CD4-positive, alpha-beta T cell (primary cell): ENCODE measurements at regions of chr4 and their contacts with region 1.

Region 1: GRCh38 chr4:142846729-142847596 is 862 bp upstream of the INPP4B start:
- DNase-seq: peak; percentile 63 to 87 (median 70)
- ATAC-seq: peak; percentile 87
- H3K4me3 ChIP-seq: peak overlapping the region; percentile 67
- H3K4me3 Mint-ChIP-seq: peak overlapping the region; percentile 89
- H3K27ac ChIP-seq: no peak overlapping the region
- H3K27ac Mint-ChIP-seq: peak overlapping the region; percentile 47
- H3K4me1 ChIP-seq: peaks cover 24% of the 10 kb centered on the region
- H3K4me1 Mint-ChIP-seq: peaks cover 14% of the 10 kb centered on the region
- H3K27me3 ChIP-seq: peaks cover 4 to 12% of the 10 kb centered on the region in 2 experiments
- H3K27me3 Mint-ChIP-seq: peaks cover 22% of the 10 kb centered on the region
- CTCF ChIP-seq: peak; percentile 70

Region 2: DNA sequence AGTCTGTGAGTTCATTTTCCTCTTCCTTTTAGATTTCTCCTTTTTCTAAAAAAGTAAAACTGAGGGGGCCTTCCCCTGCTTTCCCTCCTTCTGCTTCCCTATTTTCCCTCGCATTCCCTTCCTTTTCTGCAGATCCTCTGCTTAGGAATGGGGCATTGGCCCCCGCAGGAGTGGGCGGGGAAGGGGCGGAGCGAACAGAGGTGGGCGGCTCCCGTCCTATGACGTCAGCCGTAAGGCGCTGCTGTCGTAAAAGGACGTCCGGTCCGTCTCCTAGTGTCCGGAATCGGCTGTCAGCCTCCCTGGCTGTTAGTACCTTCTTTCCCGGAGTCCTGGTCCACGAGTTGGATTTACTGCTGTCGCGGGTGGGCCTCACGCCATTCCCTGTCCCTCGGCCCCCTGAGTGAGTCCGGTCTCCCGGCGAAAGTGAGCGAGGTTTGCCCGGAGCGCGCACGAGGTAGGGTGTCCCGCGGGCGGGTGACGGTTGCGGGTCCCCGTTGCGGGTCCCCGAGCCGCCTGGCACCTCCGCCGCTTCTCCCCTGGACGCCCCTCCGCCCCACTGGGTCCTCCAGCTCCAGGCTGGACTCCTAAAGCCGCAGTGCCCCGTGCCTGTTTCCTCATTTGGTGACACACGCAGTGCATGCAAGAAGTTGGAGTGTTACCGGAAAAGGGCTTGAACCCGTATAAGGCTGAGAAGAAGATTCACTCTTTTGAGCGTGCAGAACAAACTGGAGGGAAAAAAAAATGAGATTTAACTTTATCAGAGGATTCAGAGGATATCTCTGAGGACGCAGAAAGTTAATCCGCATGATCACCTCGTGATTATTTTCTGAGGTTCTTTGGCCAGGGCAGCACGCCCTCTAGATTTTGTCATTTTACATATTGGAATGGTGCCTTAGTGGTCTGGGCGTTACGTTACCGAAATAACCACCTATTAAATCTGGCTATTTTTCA is 1626.0 kb before region 1 on chr4 and contains the start of gene ZNF330:
- CTCF ChIA-PET with region 1: no interaction called
- POLR2A ChIA-PET with region 1: no interaction called
- intact Hi-C with region 1: loop called in 1 of 2 experiments (anchors 10 kb)
- DNase-seq: peak; percentile 79 to 93 (median 84)
- ATAC-seq: peak; percentile 88
- H3K4me3 ChIP-seq: peak within 1 kb of the TSS; percentile 90
- H3K4me3 Mint-ChIP-seq: peak within 1 kb of the TSS; percentile 100
- H3K27ac ChIP-seq: peak within 1 kb of the TSS; percentile 82 to 90
- H3K27ac Mint-ChIP-seq: peak within 1 kb of the TSS; percentile 97
- H3K4me1 ChIP-seq: peaks cover 5% of the 10 kb centered on the region
- H3K4me1 Mint-ChIP-seq: peaks cover 56% of the 10 kb centered on the region
- H3K27me3 ChIP-seq: no peaks in the 10 kb centered on the region
- H3K27me3 Mint-ChIP-seq: peaks cover 4% of the 10 kb centered on the region
- CTCF ChIP-seq: no peak
- total RNA-seq, gene ZNF330: 41.1 to 43.8 TPM

Region 3: DNA sequence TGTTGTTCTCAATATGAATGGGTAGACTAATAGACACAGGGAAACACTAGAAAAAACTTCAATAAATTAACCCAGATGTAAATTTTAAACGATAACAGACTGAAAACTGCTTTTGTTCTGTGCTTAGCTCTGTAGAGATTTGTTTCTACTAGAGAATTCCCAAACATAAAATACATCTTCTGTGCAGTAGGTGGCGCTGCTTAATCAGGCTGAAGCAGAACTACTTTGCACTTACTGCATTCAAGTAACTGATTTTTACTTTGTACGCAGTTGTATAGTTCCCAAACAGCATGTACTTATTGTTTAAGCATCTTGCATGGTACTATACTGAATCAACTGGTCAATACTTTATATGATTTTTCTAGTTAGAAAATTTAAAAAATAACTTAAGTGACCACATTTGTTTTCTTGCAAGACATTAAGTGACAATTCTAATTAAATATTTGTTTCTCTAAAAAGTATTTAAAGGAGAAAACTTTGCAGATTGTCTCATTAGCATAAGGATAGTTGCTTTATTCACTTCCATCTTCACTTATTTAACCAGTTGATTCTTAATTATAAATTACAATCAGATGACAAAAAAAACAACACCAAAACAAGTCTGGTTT is 720.0 kb before region 1 on chr4:
- CTCF ChIA-PET with region 1: interaction called, 7 read pairs
- POLR2A ChIA-PET with region 1: interaction called, 5 read pairs
- intact Hi-C with region 1: loop called (anchors 1 to 2 kb)
- DNase-seq: peak; percentile 35 to 83 (median 57)
- ATAC-seq: peak; percentile 80
- H3K4me3 ChIP-seq: no peak overlapping the region
- H3K4me3 Mint-ChIP-seq: no peak overlapping the region
- H3K27ac ChIP-seq: no peak overlapping the region
- H3K27ac Mint-ChIP-seq: peak overlapping the region; percentile 6
- H3K4me1 ChIP-seq: peaks cover 8% of the 10 kb centered on the region
- H3K4me1 Mint-ChIP-seq: peaks cover 33% of the 10 kb centered on the region
- H3K27me3 ChIP-seq: no peaks in the 10 kb centered on the region
- H3K27me3 Mint-ChIP-seq: no peaks in the 10 kb centered on the region
- CTCF ChIP-seq: peak; percentile 85

Region 4: GRCh38 chr4:142353149-142353738 is 493.7 kb before region 1 on chr4:
- CTCF ChIA-PET with region 1: no interaction called
- POLR2A ChIA-PET with region 1: interaction called, 5 read pairs
- intact Hi-C with region 1: loop called (anchors 2 kb)
- DNase-seq: peak in 4 of 14 experiments; percentile 43 to 74 (median 64)
- ATAC-seq: peak; percentile 19
- H3K4me3 ChIP-seq: no peak overlapping the region
- H3K4me3 Mint-ChIP-seq: peak overlapping the region; percentile 52
- H3K27ac ChIP-seq: peak overlapping the region in 1 of 2 donors; percentile 72
- H3K27ac Mint-ChIP-seq: peak overlapping the region; percentile 89
- H3K4me1 ChIP-seq: peaks cover 45% of the 10 kb centered on the region
- H3K4me1 Mint-ChIP-seq: peaks cover 99% of the 10 kb centered on the region
- H3K27me3 ChIP-seq: no peaks in the 10 kb centered on the region
- H3K27me3 Mint-ChIP-seq: no peaks in the 10 kb centered on the region
- CTCF ChIP-seq: peak; percentile 97

Region 5: DNA sequence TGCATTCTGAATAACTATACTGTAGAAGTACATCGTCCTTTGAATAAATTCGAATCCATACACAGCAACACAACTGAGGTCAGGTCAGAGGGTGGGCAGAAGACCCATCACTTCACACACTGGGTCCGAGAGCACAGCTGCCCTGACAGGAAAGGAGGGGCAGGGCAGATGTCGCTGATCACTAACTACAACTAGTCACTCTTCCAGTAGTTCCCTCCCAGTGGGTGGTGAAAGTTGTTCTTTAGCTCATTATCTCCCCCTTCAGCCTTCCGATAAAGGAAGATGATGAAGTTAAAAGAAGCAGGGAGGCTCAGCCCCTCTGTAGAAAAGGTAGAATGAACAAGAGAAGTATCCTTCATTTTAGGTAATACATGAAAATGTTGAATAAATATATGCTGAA is 279.8 kb before region 1 on chr4:
- CTCF ChIA-PET with region 1: no interaction called
- POLR2A ChIA-PET with region 1: interaction called, 3 read pairs
- intact Hi-C with region 1: loop called in 1 of 2 experiments (anchors 10 kb)
- DNase-seq: peak; percentile 26 to 88 (median 50)
- ATAC-seq: peak; percentile 73
- H3K4me3 ChIP-seq: peak overlapping the region; percentile 54
- H3K4me3 Mint-ChIP-seq: peak overlapping the region; percentile 88
- H3K27ac ChIP-seq: peak overlapping the region; percentile 72 to 78
- H3K27ac Mint-ChIP-seq: peak overlapping the region; percentile 95
- H3K4me1 ChIP-seq: peaks cover 9% of the 10 kb centered on the region
- H3K4me1 Mint-ChIP-seq: peaks cover 81% of the 10 kb centered on the region
- H3K27me3 ChIP-seq: no peaks in the 10 kb centered on the region
- H3K27me3 Mint-ChIP-seq: no peaks in the 10 kb centered on the region
- CTCF ChIP-seq: peak; percentile 59

Region 6: GRCh38 chr4:142607976-142608375 is 239.0 kb before region 1 on chr4:
- CTCF ChIA-PET with region 1: no interaction called
- POLR2A ChIA-PET with region 1: no interaction called
- intact Hi-C with region 1: no loop called
- DNase-seq: no peak
- ATAC-seq: no peak
- H3K4me3 ChIP-seq: no peak overlapping the region
- H3K4me3 Mint-ChIP-seq: no peak overlapping the region
- H3K27ac ChIP-seq: no peak overlapping the region
- H3K27ac Mint-ChIP-seq: no peak overlapping the region
- H3K4me1 ChIP-seq: no peaks in the 10 kb centered on the region
- H3K4me1 Mint-ChIP-seq: no peaks in the 10 kb centered on the region
- H3K27me3 ChIP-seq: no peaks in the 10 kb centered on the region
- H3K27me3 Mint-ChIP-seq: no peaks in the 10 kb centered on the region
- CTCF ChIP-seq: no peak

Region 7: GRCh38 chr4:142861351-142861750 is 14.4 kb after region 1 on chr4:
- CTCF ChIA-PET with region 1: no interaction called
- POLR2A ChIA-PET with region 1: no interaction called
- intact Hi-C with region 1: no loop called
- DNase-seq: no peak
- ATAC-seq: no peak
- H3K4me3 ChIP-seq: no peak overlapping the region
- H3K4me3 Mint-ChIP-seq: no peak overlapping the region
- H3K27ac ChIP-seq: no peak overlapping the region
- H3K27ac Mint-ChIP-seq: no peak overlapping the region
- H3K4me1 ChIP-seq: no peaks in the 10 kb centered on the region
- H3K4me1 Mint-ChIP-seq: no peaks in the 10 kb centered on the region
- H3K27me3 ChIP-seq: peaks cover 4 to 5% of the 10 kb centered on the region in 2 experiments
- H3K27me3 Mint-ChIP-seq: peaks cover 19% of the 10 kb centered on the region
- CTCF ChIP-seq: no peak